ENCODE measurements at regions of chr4 and their contacts with region 1.

Region 1: GRCh38 chr4:4430492-4431197 is 43.7 kb downstream of the NSG1 start:
- DNase-seq: peak; percentile 87

Region 2: GRCh38 chr4:4289941-4290850 is 140.4 kb before region 1 on chr4 and contains the starts of genes LYAR and ZBTB49:
- in situ Hi-C with region 1: loop called (anchors 25 kb)
- DNase-seq: peak; percentile 87
- total RNA-seq, gene LYAR: 37.1 and 38.6 TPM in 2 replicates
- total RNA-seq, gene ZBTB49: 3.6 and 5.8 TPM in 2 replicates

Region 3: DNA sequence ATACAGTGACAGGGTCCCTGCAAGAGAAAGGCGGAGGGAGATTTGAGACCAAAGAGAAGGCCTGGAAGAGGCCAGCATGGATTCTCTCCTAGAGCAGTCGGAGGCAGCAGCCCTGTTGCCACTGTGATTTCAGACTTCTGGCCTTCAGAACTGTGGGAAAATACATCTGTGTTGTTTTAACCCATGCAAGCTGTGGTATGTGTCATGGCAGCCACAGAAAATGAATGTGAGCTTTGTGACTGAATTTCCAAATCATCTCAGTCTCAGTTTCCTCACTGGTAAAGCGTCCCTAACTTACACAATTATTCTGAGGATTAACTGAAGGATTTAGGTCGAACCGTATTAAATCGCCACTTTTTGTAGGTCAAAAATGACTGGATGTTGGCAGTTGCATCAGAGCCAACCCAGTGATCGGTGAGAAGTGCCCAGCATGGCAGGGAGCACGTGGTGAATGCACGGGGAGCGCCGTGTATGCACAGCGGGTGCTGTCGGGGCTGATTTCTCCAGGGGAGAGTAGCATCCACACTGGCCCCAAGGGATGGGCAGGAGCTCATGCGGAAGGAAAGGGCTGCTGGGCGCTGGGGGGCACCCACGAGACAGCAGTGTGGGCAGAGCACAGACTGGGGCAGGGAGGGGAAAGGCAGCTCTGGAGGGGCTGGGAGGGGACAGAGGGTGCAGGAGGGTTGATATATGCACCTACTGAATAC is 67.5 kb before region 1 on chr4:
- in situ Hi-C with region 1: no loop called
- DNase-seq: peak; percentile 41

Region 4: GRCh38 chr4:4507923-4508322 is 77.3 kb after region 1 on chr4:
- in situ Hi-C with region 1: no loop called
- DNase-seq: peak; percentile 13

Measured in SK-MEL-5 (cell line).